Natural killer cell (primary cell): ENCODE measurements at regions of chr19 and their contacts with region 1.

Region 1: DNA sequence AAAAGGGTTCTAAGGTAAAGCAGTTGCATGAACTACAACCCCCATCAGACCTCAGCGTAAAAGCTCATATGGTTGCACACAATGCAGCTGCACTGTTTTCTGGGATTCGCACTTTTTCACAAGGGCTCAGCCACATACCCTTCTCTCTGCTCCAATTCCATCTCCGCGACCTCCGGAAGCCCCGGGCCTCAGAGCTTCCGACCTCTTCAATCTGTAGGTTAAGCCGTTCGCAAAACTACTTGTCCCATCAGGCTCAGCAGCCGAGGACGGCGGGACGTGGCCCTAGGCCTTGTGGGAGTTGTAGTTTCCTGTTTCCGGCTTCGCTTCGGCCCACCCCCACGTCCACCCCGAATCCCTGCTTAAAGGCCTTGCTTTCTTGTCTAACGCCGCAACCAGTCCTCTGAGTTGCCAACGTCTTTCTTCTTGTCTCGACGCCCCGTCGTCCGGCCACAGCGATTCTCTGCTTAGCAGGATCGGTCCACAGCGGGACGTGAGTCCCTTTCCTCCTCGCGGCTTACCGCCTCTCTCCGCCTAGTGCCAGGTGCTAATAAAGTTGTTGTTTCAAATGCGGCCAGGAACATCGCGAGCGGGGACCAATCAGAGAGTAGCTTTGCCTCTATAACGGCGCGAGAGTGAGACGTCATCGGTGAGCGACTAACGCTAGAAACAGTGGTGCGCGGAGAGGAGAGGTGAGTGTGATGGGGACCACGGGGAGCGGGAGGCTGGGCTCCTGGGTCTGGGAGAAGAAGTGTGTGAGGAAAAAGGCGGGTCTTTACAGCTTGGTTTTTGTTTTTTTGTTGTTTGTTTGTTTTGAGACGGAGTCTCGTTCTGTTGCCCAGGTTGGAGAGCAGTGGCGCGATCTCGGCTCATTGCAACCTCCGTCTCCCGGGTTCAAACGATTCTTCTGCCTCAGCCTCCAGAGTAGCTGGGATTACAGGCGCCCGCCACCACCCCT is at the starts of genes PRPF31 and TFPT:
- DNase-seq: peak; percentile 94 to 99
- ATAC-seq: peak; percentile 91 to 95 (median 93)
- H3K4me3 ChIP-seq: peak within 1 kb of the TSS; percentile 56
- H3K4me3 Mint-ChIP-seq: peak within 1 kb of the TSS; percentile 92
- H3K27ac ChIP-seq: peak within 1 kb of the TSS; percentile 67
- H3K27ac Mint-ChIP-seq: peak within 1 kb of the TSS; percentile 87 to 88
- H3K4me1 ChIP-seq: peaks cover 24% of the 10 kb centered on the region
- H3K4me1 Mint-ChIP-seq: peaks cover 27 to 44% of the 10 kb centered on the region in 2 donors
- H3K27me3 ChIP-seq: no peaks in the 10 kb centered on the region
- H3K27me3 Mint-ChIP-seq: no peaks in the 10 kb centered on the region
- CTCF ChIP-seq: no peak
- total RNA-seq, gene PRPF31: 64.4 to 65.9 (median 64.9) TPM
- total RNA-seq, gene TFPT: 14.1 to 14.4 (median 14.2) TPM

Region 2: GRCh38 chr19:54102421-54103169 is 12.8 kb before region 1 on chr19 and contains the start of gene NDUFA3:
- intact Hi-C with region 1: loop called (anchors 1 kb)
- DNase-seq: peak; percentile 95 to 100
- ATAC-seq: peak; percentile 99 to 100 (median 99)
- H3K4me3 ChIP-seq: peak within 1 kb of the TSS; percentile 74
- H3K4me3 Mint-ChIP-seq: peak within 1 kb of the TSS; percentile 97
- H3K27ac ChIP-seq: peak within 1 kb of the TSS; percentile 82
- H3K27ac Mint-ChIP-seq: peak within 1 kb of the TSS; percentile 89 to 99
- H3K4me1 ChIP-seq: peaks cover 14% of the 10 kb centered on the region
- H3K4me1 Mint-ChIP-seq: peaks cover 13 to 30% of the 10 kb centered on the region in 2 donors
- H3K27me3 ChIP-seq: no peaks in the 10 kb centered on the region
- H3K27me3 Mint-ChIP-seq: no peaks in the 10 kb centered on the region
- CTCF ChIP-seq: no peak
- total RNA-seq, gene NDUFA3: 48.4 to 91.9 (median 71.4) TPM

Region 3: GRCh38 chr19:54137086-54137921 is 21.9 kb after region 1 on chr19 and contains the start of gene CNOT3:
- intact Hi-C with region 1: loop called (anchors 1 kb)
- DNase-seq: peak; percentile 98 to 100
- ATAC-seq: peak; percentile 76 to 90 (median 79)
- H3K4me3 ChIP-seq: peak within 1 kb of the TSS; percentile 76
- H3K4me3 Mint-ChIP-seq: peak within 1 kb of the TSS; percentile 95
- H3K27ac ChIP-seq: peak within 1 kb of the TSS; percentile 94
- H3K27ac Mint-ChIP-seq: peak within 1 kb of the TSS; percentile 80 to 90
- H3K4me1 ChIP-seq: peaks cover 41% of the 10 kb centered on the region
- H3K4me1 Mint-ChIP-seq: peaks cover 50 to 58% of the 10 kb centered on the region in 2 donors
- H3K27me3 ChIP-seq: no peaks in the 10 kb centered on the region
- H3K27me3 Mint-ChIP-seq: no peaks in the 10 kb centered on the region
- CTCF ChIP-seq: no peak
- total RNA-seq, gene CNOT3: 46.3 to 73.9 (median 51.7) TPM

Region 4: GRCh38 chr19:54159352-54160181 is 44.2 kb after region 1 on chr19 and contains the start of gene LENG1:
- intact Hi-C with region 1: loop called (anchors 1 kb)
- DNase-seq: peak; percentile 97 to 100
- ATAC-seq: peak; percentile 82 to 94 (median 86)
- H3K4me3 ChIP-seq: peak within 1 kb of the TSS; percentile 71
- H3K4me3 Mint-ChIP-seq: peak within 1 kb of the TSS; percentile 100
- H3K27ac ChIP-seq: peak within 1 kb of the TSS; percentile 86
- H3K27ac Mint-ChIP-seq: peak within 1 kb of the TSS; percentile 99 to 100
- H3K4me1 ChIP-seq: peaks cover 58% of the 10 kb centered on the region
- H3K4me1 Mint-ChIP-seq: peaks cover 54 to 65% of the 10 kb centered on the region in 2 donors
- H3K27me3 ChIP-seq: no peaks in the 10 kb centered on the region
- H3K27me3 Mint-ChIP-seq: no peaks in the 10 kb centered on the region
- CTCF ChIP-seq: peak; percentile 17
- total RNA-seq, gene LENG1: 8.3 to 9.4 (median 9.1) TPM

Region 5: GRCh38 chr19:54207977-54208783 is 92.8 kb after region 1 on chr19:
- intact Hi-C with region 1: no loop called
- DNase-seq: peak in 1 of 2 donors; percentile 70
- ATAC-seq: peak in 1 of 3 donors; percentile 58
- H3K4me3 ChIP-seq: no peak overlapping the region
- H3K4me3 Mint-ChIP-seq: peak overlapping the region; percentile 53
- H3K27ac ChIP-seq: peak overlapping the region; percentile 67
- H3K27ac Mint-ChIP-seq: peak overlapping the region; percentile 71 to 94
- H3K4me1 ChIP-seq: peaks cover 76% of the 10 kb centered on the region
- H3K4me1 Mint-ChIP-seq: peaks cover 46 to 50% of the 10 kb centered on the region in 2 donors
- H3K27me3 ChIP-seq: no peaks in the 10 kb centered on the region
- H3K27me3 Mint-ChIP-seq: no peaks in the 10 kb centered on the region
- CTCF ChIP-seq: no peak